Transverse colon (tissue), 4 donors: ENCODE measurements at regions of chr9 and their contacts with region 1.

Region 1: DNA sequence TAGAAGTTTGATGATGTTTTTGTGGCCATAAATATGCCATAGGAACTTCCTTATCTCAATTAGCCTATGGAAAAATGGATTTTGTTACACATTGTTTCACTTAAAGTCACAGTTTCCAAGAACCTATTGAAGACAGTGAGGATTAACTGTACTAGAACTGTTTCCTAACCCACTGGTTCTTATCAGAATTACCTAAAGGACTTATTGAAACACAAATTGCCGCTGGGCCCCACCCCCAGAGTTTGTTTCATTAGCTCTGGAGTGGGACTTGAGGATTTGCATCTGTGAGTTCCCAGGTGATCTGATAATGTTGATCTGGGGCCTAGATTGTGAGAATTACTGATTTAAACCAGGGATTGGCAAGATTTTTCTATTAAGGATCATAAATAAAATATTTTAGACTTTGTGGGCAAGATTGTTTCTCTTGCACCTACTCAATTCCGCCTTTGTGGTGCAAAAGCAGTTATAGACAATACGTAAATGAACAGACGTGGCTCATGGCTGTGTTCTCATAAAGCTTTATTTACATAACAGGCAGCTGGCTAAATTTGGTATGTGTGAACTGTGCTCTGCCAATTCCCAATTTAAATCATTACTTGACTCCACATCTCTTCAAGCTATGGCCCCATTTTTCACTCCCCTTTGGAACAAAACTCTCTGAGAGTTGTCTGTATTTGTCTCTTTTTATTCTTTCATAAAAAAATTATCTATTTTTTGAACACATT is 9.3 kb downstream of the JAK2 start:
- DNase-seq: no peak
- H3K4me3 ChIP-seq: no peak overlapping the region
- H3K27ac ChIP-seq: no peak overlapping the region
- H3K4me1 ChIP-seq: peaks cover 0 to 21% (median 2%) of the 10 kb centered on the region in 4 donors
- H3K27me3 ChIP-seq: no peaks in the 10 kb centered on the region
- CTCF ChIP-seq: no peak
- EP300 ChIP-seq: no peak
- POLR2A ChIP-seq: no peak

Region 2: DNA sequence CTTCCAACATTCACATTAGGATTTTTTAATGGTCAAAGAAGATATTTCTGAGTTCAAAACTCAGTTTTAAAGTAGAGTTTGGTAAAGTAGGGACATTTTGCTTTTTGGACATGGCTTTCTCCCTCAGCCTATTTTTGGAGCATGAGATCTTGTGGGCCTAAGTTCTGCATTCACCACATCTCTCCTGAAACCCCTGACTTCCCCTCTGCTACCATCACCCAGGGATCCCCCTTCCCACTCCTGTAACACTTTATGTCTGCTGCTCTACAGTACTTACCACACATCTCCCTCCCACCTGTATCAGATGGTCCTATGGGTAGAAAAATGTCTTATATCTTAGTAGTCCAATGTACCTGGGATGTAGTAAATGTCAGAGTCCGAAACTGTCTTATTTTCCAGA is 57.5 kb before region 1 on chr9:
- in situ Hi-C with region 1: no loop called
- intact Hi-C with region 1: no loop called
- DNase-seq: no peak
- H3K4me3 ChIP-seq: no peak overlapping the region
- H3K27ac ChIP-seq: no peak overlapping the region
- H3K4me1 ChIP-seq: peaks cover 0 to 21% (median 2%) of the 10 kb centered on the region in 4 donors
- H3K27me3 ChIP-seq: no peaks in the 10 kb centered on the region
- CTCF ChIP-seq: no peak
- EP300 ChIP-seq: no peak
- POLR2A ChIP-seq: no peak

Region 3: GRCh38 chr9:5336688-5337087 is 342.4 kb after region 1 on chr9:
- in situ Hi-C with region 1: no loop called
- intact Hi-C with region 1: no loop called
- DNase-seq: no peak
- H3K4me3 ChIP-seq: no peak overlapping the region
- H3K27ac ChIP-seq: no peak overlapping the region
- H3K4me1 ChIP-seq: no peaks in the 10 kb centered on the region
- H3K27me3 ChIP-seq: no peaks in the 10 kb centered on the region
- CTCF ChIP-seq: no peak
- EP300 ChIP-seq: no peak
- POLR2A ChIP-seq: no peak

Region 4: GRCh38 chr9:6681147-6681956 is 1687.0 kb after region 1 on chr9:
- in situ Hi-C with region 1: no loop called
- intact Hi-C with region 1: loop called (anchors 5 kb)
- DNase-seq: peak; percentile 97
- H3K4me3 ChIP-seq: peak overlapping the region; percentile 44 to 74 (median 64)
- H3K27ac ChIP-seq: peak overlapping the region; percentile 93 to 97 (median 96)
- H3K4me1 ChIP-seq: peaks cover 0 to 14% (median 9%) of the 10 kb centered on the region in 4 donors
- H3K27me3 ChIP-seq: no peaks in the 10 kb centered on the region
- CTCF ChIP-seq: peak in 1 of 5 experiments; percentile 19
- EP300 ChIP-seq: no peak
- POLR2A ChIP-seq: peak; percentile 90